ENCODE measurements at regions of chr18 and their contacts with region 1.

Region 1: GRCh38 chr18:46155641-46156051 is 51.5 kb downstream of the HAUS1 start:
- H3K4me3 Mint-ChIP-seq: no peak overlapping the region
- H3K27ac Mint-ChIP-seq: no peak overlapping the region
- H3K4me1 Mint-ChIP-seq: no peaks in the 10 kb centered on the region
- H3K27me3 Mint-ChIP-seq: no peaks in the 10 kb centered on the region

Region 2: DNA sequence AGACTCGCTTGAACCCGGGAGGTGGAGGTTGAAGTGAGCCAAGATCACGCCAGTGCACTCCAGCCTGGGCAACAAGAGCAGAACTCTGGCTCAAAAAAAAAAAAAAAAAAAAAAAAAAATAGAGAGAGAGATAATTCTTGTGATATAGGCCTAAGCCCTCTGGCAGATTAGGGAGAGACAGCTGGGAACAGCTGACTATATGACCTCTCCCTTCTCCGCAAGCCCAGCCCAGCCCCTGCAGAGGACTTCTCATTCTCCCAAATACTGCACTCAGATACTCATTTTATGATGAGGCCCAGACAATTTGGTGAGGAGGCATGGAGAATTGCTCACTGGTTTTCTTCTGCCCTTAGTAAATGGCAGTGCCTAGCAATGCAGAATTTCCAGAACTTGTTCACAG is 210.6 kb after region 1 on chr18:
- intact Hi-C with region 1: no loop called
- H3K4me3 Mint-ChIP-seq: no peak overlapping the region
- H3K27ac Mint-ChIP-seq: no peak overlapping the region
- H3K4me1 Mint-ChIP-seq: no peaks in the 10 kb centered on the region
- H3K27me3 Mint-ChIP-seq: no peaks in the 10 kb centered on the region

Region 3: DNA sequence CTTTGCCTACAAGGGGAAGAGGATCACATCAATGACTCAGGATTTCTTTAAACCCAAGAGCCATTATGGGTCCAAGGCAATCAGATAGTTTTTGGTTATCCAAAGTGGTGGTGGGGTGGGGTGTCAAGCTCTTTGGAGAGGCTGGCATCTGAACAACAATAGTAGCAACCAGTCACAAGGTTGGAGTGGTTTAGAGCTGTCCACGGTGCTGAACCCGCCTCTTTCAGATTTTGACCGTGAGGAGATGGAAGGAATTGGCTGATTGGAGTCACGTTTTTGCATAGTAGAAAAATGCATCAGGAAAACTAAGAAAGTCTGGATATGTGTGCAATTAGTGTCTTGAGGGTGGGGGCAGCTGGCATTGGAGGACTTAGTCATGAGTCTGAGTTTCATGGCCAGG is 341.5 kb after region 1 on chr18:
- intact Hi-C with region 1: loop called (anchors 10 kb)
- H3K4me3 Mint-ChIP-seq: no peak overlapping the region
- H3K27ac Mint-ChIP-seq: no peak overlapping the region
- H3K4me1 Mint-ChIP-seq: no peaks in the 10 kb centered on the region
- H3K27me3 Mint-ChIP-seq: no peaks in the 10 kb centered on the region

Measured in dendritic cell treated with granulocyte-macrophage colony-stimulating factor and Interleukin-4, amounts not matched to agents 40 ng/mL and 50 ng/mL, for 4 days (primary cell).